Right cardiac atrium (tissue), 5 donors: ENCODE measurements at regions of chr22 and their contacts with region 1.

Region 1: GRCh38 chr22:41517172-41518047 is 26.9 kb downstream of the POLR3H start:
- DNase-seq: peak; percentile 66 to 86 (median 73)
- ATAC-seq: peak; percentile 22 to 44
- H3K4me3 ChIP-seq: no peak overlapping the region
- H3K27ac ChIP-seq: no peak overlapping the region
- H3K4me1 ChIP-seq: peaks cover 8% of the 10 kb centered on the region
- H3K27me3 ChIP-seq: no peaks in the 10 kb centered on the region

Region 2: DNA sequence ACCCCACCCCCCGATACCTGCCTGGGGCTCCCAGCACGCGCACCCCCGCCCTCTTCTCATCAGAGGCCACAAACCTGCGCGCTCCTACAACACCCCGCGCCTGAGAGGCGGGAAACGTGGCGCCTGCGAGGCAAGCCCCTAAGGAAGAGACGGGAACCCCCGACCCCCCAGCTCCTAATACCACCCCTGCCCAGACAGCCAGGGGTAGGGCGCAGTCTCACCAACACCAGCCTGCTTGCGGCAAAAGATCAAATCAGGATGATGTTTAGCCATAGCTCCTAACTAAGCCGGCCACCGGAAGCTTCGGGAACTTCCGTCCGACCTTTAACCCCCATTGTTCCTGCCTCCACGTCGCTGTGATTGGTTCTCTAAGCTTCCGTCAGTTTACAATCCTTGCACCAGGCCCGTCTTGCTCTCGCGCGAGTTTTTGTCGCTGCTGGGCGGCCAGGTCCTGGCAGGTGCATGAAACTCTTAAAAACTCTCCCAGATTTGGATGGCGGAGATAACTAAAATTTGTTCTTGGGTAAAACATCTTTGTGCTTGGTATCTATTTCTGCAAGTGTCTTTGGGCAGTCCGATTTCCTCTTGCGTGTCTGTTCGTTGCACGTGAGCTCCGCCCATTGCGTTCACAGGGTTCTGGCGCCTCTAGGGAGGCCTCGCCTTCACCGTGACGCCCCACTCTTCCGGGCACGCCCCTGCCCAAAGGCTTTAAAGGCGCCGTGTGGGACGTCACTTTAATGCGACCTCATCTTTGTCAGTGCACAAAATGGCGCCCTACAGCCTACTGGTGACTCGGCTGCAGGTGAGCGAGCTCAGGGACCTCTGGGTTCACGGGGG is 48.8 kb before region 1 on chr22 and contains the starts of genes ACO2 and PHF5A:
- intact Hi-C with region 1: loop called in 2 of 4 experiments (anchors 5 to 10 kb)
- DNase-seq: peak; percentile 98 to 99 (median 99)
- ATAC-seq: peak; percentile 98
- H3K4me3 ChIP-seq: peak within 1 kb of the TSS; percentile 91
- H3K27ac ChIP-seq: peak within 1 kb of the TSS; percentile 98
- H3K4me1 ChIP-seq: peaks cover 1% of the 10 kb centered on the region
- H3K27me3 ChIP-seq: no peaks in the 10 kb centered on the region
- total RNA-seq, gene ACO2: 532 to 611 (median 544) TPM
- total RNA-seq, gene PHF5A: 22.4 to 26.0 (median 25.0) TPM